Testis (tissue), 5 donors: ENCODE measurements at regions of chr10 and their contacts with region 1.

Region 1: GRCh38 chr10:115790220-115790619 is 482.8 kb downstream of the GFRA1 start:
- DNase-seq: no peak
- H3K4me3 ChIP-seq: no peak overlapping the region
- H3K27ac ChIP-seq: no peak overlapping the region
- H3K4me1 ChIP-seq: no peaks in the 10 kb centered on the region
- H3K27me3 ChIP-seq: no peaks in the 10 kb centered on the region
- CTCF ChIP-seq: no peak
- POLR2A ChIP-seq: no peak

Region 2: GRCh38 chr10:115073796-115074195 is 716.4 kb before region 1 on chr10:
- intact Hi-C with region 1: no loop called
- DNase-seq: no peak
- H3K4me3 ChIP-seq: no peak overlapping the region
- H3K27ac ChIP-seq: no peak overlapping the region
- H3K4me1 ChIP-seq: no peaks in the 10 kb centered on the region
- H3K27me3 ChIP-seq: no peaks in the 10 kb centered on the region
- CTCF ChIP-seq: no peak
- POLR2A ChIP-seq: no peak

Region 3: GRCh38 chr10:115580239-115580638 is 210.0 kb before region 1 on chr10:
- intact Hi-C with region 1: no loop called
- DNase-seq: no peak
- H3K4me3 ChIP-seq: no peak overlapping the region
- H3K27ac ChIP-seq: no peak overlapping the region
- H3K4me1 ChIP-seq: no peaks in the 10 kb centered on the region
- H3K27me3 ChIP-seq: no peaks in the 10 kb centered on the region
- CTCF ChIP-seq: no peak
- POLR2A ChIP-seq: no peak

Region 4: DNA sequence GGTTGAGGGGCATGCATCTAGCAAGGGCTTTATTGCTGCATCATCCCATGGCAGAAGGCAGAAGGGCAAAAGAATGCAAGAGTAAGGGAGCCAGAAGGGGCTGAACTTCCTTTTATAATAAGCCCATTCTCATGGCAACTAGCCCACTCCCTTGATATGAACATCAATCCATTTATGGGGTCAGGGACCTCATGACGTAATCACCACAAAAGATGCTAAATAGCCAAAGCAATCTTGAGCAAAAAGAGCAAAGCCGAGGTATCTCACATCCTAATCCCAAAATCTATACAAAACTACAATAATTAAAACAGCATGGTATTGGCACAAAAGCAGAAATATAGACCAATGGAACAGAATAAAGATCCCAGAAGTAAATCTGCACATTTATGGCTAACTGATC is 197.2 kb before region 1 on chr10:
- intact Hi-C with region 1: no loop called
- DNase-seq: no peak
- H3K4me3 ChIP-seq: no peak overlapping the region
- H3K27ac ChIP-seq: no peak overlapping the region
- H3K4me1 ChIP-seq: no peaks in the 10 kb centered on the region
- H3K27me3 ChIP-seq: no peaks in the 10 kb centered on the region
- CTCF ChIP-seq: no peak
- POLR2A ChIP-seq: no peak

Region 5: GRCh38 chr10:115747811-115748210 is 42.4 kb before region 1 on chr10:
- intact Hi-C with region 1: no loop called
- DNase-seq: no peak
- H3K4me3 ChIP-seq: no peak overlapping the region
- H3K27ac ChIP-seq: no peak overlapping the region
- H3K4me1 ChIP-seq: no peaks in the 10 kb centered on the region
- H3K27me3 ChIP-seq: no peaks in the 10 kb centered on the region
- CTCF ChIP-seq: no peak
- POLR2A ChIP-seq: no peak

Region 6: DNA sequence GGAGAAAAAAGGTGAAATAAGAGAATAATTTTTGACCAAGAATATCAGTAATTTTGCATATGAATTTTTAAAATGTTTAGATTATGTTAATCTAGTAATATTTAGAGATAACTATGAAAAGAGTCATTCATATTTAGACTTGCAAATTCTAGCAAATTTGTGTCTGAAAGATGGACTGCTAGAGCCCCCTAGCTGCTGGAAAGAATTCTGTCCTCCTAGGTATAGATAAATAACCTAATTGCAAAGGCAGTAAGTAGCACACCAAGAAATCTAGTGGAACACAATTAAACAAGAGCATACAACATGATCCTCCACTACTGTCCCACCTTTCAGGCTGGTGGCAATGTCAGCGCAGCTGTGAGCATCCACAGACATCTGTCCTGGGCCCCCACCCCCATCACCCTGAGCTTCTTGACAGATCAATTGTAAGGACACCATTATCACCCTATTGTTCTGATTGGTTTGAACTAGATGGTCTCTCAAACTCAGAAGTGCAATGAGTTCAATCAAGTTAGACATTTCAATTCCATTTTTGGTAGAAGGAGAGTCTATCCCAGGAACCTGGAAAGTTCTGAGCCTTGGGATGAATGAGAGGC is 497.8 kb after region 1 on chr10:
- intact Hi-C with region 1: loop called (anchors 10 kb)
- DNase-seq: peak; percentile 68
- H3K4me3 ChIP-seq: no peak overlapping the region
- H3K27ac ChIP-seq: no peak overlapping the region
- H3K4me1 ChIP-seq: no peaks in the 10 kb centered on the region
- H3K27me3 ChIP-seq: no peaks in the 10 kb centered on the region
- CTCF ChIP-seq: peak; percentile 57 to 76 (median 63)
- POLR2A ChIP-seq: no peak